Naive thymus-derived CD4-positive, alpha-beta T cell (primary cell): ENCODE measurements at regions of chr1 and their contacts with region 1.

Region 1: DNA sequence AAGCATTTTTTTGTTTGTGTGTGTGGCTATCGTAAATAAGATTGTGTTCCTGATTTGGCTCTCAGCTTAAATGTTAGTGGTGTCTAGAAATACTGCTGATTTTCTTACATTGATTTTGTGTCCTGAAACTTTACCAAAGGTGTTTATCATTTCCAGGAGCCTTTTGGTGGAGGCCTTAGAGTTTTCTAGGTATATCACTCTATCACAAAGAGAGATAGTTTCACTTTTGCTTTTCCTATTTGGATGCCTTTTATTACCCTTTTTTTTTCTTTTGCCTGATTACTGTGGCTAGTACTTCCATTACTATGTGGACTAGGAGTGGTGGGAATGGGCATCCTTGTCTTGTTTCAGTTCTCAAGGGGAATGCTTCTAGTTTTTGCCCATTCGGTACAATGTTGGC is 109.6 kb downstream of the S1PR1 start:
- DNase-seq: no peak
- ATAC-seq: no peak
- H3K4me3 ChIP-seq: peak overlapping the region; percentile 10
- H3K4me3 Mint-ChIP-seq: peak overlapping the region; percentile 3 to 82 (median 69)
- H3K27ac ChIP-seq: peak overlapping the region; percentile 38
- H3K27ac Mint-ChIP-seq: peak overlapping the region; percentile 2 to 86 (median 75)
- H3K4me1 ChIP-seq: peaks cover 6 to 8% of the 10 kb centered on the region in 2 donors
- H3K4me1 Mint-ChIP-seq: peaks cover 21 to 58% (median 31%) of the 10 kb centered on the region in 7 donors
- H3K27me3 ChIP-seq: no peaks in the 10 kb centered on the region
- H3K27me3 Mint-ChIP-seq: peaks cover 0 to 7% (median 0%) of the 10 kb centered on the region in 5 donors

Region 2: DNA sequence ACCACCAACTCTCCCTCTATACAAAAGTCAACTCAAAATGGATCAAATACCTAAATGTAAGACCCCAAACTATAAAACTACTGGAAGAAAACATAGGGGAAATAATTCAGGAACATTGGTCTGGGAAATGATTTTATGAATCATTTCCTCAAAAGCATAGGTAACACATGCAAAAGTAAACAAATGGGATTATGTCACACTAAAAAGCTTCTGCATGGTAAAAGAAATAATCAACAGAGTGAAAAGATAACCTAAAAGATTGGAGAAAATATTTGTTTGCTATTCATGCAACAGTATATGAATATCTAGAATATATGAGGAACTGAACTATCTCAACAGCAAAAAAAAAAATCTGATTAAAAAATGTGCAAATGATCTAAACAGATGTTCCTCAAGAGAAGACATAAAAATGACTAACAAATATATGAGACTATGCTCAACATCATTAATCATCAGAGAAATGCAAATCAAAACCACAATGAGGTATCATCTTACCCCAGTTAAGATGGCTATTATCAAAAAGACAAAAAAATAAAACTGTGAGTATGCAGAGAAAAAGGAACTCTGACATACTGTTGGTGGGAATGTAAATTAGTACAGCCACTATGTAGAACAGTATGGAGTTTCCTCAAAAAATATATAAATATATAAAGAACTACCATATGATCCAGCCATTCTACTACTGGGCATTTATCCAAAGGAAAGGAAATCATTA is 579.1 kb before region 1 on chr1:
- CTCF ChIA-PET with region 1: no interaction called
- POLR2A ChIA-PET with region 1: no interaction called
- intact Hi-C with region 1: no loop called
- DNase-seq: no peak
- ATAC-seq: no peak
- H3K4me3 ChIP-seq: no peak overlapping the region
- H3K4me3 Mint-ChIP-seq: no peak overlapping the region
- H3K27ac ChIP-seq: no peak overlapping the region
- H3K27ac Mint-ChIP-seq: no peak overlapping the region
- H3K4me1 ChIP-seq: no peaks in the 10 kb centered on the region
- H3K4me1 Mint-ChIP-seq: no peaks in the 10 kb centered on the region
- H3K27me3 ChIP-seq: no peaks in the 10 kb centered on the region
- H3K27me3 Mint-ChIP-seq: peaks cover 0 to 18% (median 4%) of the 10 kb centered on the region in 5 donors

Region 3: DNA sequence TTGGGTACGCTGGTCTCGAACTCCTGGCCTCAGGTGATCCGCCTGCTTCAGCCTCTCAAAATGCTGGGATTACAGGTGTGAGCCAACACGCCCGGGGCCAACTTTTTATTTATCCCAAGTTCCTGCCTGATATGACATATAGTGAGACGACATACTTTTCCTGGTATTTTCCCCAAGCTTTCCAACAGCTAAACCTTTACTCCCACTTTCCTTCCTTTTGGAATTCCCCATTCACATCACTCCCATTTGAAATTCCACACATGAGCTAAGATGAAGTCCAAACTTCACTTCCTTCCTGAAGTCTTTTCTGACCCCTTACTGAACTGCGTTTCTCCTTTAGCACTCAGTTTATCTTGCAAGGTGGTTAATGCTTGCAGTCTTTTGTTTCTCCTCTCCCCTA is 45.5 kb before region 1 on chr1:
- CTCF ChIA-PET with region 1: no interaction called
- POLR2A ChIA-PET with region 1: no interaction called
- intact Hi-C with region 1: no loop called
- DNase-seq: no peak
- ATAC-seq: no peak
- H3K4me3 ChIP-seq: no peak overlapping the region
- H3K4me3 Mint-ChIP-seq: no peak overlapping the region
- H3K27ac ChIP-seq: no peak overlapping the region
- H3K27ac Mint-ChIP-seq: peak overlapping the region in 2 of 9 donors; percentile 1 to 12
- H3K4me1 ChIP-seq: no peaks in the 10 kb centered on the region
- H3K4me1 Mint-ChIP-seq: peaks cover 0 to 17% (median 9%) of the 10 kb centered on the region in 7 donors
- H3K27me3 ChIP-seq: no peaks in the 10 kb centered on the region
- H3K27me3 Mint-ChIP-seq: peaks cover 0 to 33% (median 0%) of the 10 kb centered on the region in 5 donors

Region 4: DNA sequence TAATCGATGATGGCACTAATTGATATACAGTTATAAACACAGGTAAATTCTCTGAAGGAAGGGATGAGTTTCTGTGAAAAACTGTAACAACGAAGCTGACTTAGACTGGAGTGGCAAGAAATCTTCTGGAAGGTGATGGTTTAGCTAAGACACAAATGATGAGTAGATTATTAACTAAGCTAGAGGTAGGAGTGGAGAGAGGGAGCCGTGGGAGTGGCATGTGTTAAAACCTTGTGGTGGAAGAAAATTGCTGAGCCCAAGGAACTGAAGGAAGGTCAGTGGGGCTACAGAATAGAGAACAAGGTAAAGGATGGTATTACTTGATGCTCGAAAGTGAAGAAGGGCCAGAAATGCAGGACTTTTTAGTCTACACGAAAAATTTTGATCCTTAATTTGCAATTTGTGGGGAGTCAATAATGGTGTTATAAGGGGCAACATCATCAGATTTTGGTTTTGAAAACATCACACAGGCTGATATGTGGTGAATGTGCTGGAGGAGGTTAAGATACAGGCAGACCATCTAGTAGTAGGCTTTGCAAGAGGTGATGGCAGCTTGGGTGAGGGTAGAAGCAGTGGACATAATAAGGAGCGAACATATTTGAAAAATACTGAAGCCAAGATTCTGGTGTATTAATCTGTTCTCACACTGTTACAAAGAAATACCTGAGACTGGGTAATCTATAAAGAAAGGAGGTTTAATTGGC is 15.8 kb before region 1 on chr1:
- CTCF ChIA-PET with region 1: no interaction called
- POLR2A ChIA-PET with region 1: no interaction called
- intact Hi-C with region 1: loop called in 1 of 2 experiments (anchors 2 kb)
- DNase-seq: no peak
- ATAC-seq: no peak
- H3K4me3 ChIP-seq: no peak overlapping the region
- H3K4me3 Mint-ChIP-seq: no peak overlapping the region
- H3K27ac ChIP-seq: no peak overlapping the region
- H3K27ac Mint-ChIP-seq: peak overlapping the region in 1 of 9 donors; percentile 13
- H3K4me1 ChIP-seq: peaks cover 0 to 6% of the 10 kb centered on the region in 2 donors
- H3K4me1 Mint-ChIP-seq: peaks cover 0 to 26% (median 0%) of the 10 kb centered on the region in 7 donors
- H3K27me3 ChIP-seq: no peaks in the 10 kb centered on the region
- H3K27me3 Mint-ChIP-seq: peaks cover 0 to 23% (median 0%) of the 10 kb centered on the region in 5 donors